Adrenal gland (tissue), 19 donors: ENCODE measurements at regions of chr15 and their contacts with region 1.

Region 1: DNA sequence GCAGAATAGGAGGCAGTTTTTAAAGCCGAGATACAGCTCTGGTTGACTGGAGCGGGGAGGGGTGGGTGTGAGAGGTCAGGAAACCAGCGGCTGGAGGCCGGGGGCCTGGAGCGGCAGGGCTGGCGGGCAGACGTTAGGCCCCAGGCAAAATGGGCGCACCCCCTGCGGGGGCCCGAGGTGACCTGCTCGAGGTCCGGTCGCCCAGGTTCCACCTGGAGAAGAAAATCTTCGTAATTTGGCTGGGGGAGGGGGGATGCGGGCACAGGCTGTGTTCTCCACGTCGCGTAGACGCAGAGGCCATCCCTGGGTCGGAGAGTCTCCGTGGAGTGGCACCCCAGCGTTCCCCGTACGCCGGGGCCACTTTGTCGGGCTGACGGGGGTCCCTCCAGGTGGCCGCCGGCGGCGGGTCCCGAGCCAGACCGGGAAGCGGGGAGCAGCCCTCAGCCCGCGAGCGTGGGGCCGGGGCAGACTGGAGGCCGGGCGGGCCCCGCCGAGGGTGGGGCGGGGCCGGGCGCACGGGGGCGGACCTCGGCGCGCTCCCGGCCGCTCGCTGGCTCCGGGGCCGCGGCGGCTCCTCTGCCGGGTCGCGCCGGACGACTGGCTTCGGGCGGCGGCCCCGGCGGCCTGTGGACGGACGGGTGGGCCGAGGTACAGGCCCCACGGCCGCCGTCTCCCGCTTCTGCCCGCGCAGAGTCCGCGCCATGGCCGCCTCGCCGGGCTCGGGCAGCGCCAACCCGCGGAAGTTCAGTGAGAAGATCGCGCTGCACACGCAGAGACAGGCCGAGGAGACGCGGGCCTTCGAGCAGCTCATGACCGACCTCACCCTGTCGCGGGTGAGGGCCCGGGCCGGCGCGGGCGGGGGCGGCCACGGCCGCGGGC is at the start of gene CRTC3:
- DNase-seq: peak; percentile 41 to 71 (median 55)
- H3K4me3 ChIP-seq: peak within 1 kb of the TSS; percentile 28 to 86 (median 80)
- H3K27ac ChIP-seq: peak within 1 kb of the TSS in 4 of 5 donors; percentile 82 to 98 (median 87)
- H3K4me1 ChIP-seq: peaks cover 6 to 23% of the 10 kb centered on the region in 2 donors
- H3K27me3 ChIP-seq: no peaks in the 10 kb centered on the region
- CTCF ChIP-seq: peak in 1 of 6 experiments; percentile 22
- POLR2A ChIP-seq: peak; percentile 66 to 69
- total RNA-seq, gene CRTC3: 14.9 to 46.7 (median 35.3) TPM

Region 2: DNA sequence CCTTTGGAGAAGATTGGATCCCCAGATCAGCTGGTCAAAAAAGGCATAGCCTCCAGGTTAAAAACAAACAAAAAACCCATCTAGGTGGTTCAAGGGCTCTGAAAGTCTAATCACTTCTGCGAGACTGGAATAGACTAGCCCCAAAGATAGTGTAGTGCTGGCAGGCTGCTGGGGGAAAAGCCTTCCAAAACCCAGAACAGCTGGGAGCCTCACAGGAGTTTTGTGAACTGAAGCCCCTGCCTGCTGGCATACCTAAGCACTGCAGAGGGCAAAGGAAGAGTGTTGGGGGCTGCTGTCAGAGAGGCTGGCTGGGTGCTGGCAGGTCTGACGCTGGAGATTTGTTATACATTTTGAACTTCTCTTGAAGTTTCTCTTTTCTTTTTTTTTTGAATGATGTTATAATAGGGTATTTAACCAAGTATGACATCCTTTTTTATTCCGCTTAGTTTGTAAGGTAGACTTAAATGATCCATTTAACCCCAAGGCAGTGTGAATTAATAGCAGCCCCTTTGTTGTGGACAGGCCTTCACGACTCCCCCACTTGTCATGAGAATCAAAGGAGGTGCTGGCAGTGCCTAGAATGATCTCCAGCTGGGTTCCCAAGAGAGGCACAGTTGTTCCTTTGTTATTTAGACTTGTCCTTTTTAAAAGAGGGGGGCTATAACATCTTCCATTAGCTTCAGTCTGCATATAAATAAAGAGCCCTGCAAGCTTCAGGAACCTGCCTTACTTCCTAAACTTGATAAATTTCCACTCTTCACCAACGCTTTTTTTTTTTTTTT is 54.1 kb after region 1 on chr15:
- intact Hi-C with region 1: no loop called
- DNase-seq: no peak
- H3K4me3 ChIP-seq: no peak overlapping the region
- H3K27ac ChIP-seq: no peak overlapping the region
- H3K4me1 ChIP-seq: peaks cover 0 to 28% of the 10 kb centered on the region in 2 donors
- H3K27me3 ChIP-seq: no peaks in the 10 kb centered on the region
- CTCF ChIP-seq: no peak
- POLR2A ChIP-seq: no peak

Region 3: GRCh38 chr15:90603893-90604292 is 74.3 kb after region 1 on chr15:
- intact Hi-C with region 1: loop called in 1 of 2 experiments (anchors 10 kb)
- DNase-seq: peak in 5 of 7 donors; percentile 40 to 67 (median 49)
- H3K4me3 ChIP-seq: no peak overlapping the region
- H3K27ac ChIP-seq: no peak overlapping the region
- H3K4me1 ChIP-seq: no peaks in the 10 kb centered on the region
- H3K27me3 ChIP-seq: no peaks in the 10 kb centered on the region
- CTCF ChIP-seq: peak; percentile 13 to 50 (median 36)
- POLR2A ChIP-seq: no peak